Endothelial cell of umbilical vein (primary cell): ENCODE measurements at regions of chrX and their contacts with region 1.

Region 1: GRCh38 chrX:48521353-48522243 is at the start of gene EBP:
- DNase-seq: peak; percentile 83
- H3K4me3 ChIP-seq: peak within 1 kb of the TSS; percentile 45 to 69 (median 65)
- H3K27ac ChIP-seq: peak within 1 kb of the TSS; percentile 10
- H3K4me1 ChIP-seq: peaks cover 2% of the 10 kb centered on the region
- H3K27me3 ChIP-seq: no peaks in the 10 kb centered on the region
- CTCF ChIP-seq: no peak
- POLR2A ChIP-seq: peak; percentile 71
- total RNA-seq, gene EBP: 102 and 114 TPM in 2 replicates

Region 2: DNA sequence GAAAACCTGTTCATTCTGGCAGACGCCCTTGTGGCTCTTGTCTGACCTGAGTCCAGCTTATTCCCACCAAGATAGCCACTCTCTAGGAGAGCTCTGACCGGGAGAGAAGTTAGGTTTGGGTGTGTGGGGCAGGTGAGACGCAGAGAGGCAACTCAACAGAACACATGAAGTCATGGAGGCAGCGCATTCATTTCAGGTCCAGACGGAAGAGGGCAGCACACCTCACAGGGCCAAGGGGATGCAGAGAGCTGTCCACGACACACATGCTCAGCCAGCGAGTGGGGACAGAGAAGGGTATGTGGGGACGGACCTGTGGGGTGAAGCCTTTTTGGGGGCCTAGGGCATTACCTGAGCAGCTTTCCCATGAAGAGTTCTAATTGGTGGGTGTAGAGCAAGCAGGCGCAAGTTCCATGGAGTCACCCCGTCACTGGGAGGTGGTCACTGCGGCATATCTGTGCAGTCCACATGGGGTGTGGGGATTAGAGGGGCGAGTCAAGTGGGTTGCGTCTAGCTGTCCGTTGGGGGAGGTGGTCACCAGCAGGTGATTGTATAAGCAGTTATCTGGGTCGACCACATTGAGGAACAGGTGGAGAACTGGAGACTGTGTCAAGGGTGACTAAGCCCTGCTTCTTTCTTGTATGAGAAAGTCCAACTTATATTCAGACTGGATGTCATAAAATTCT is 838.3 kb before region 1 on chrX:
- CTCF ChIA-PET with region 1: no interaction called
- POLR2A ChIA-PET with region 1: no interaction called
- dilution Hi-C with region 1: no loop called
- intact Hi-C with region 1: no loop called
- DNase-seq: no peak
- H3K4me3 ChIP-seq: no peak overlapping the region
- H3K27ac ChIP-seq: no peak overlapping the region
- H3K4me1 ChIP-seq: no peaks in the 10 kb centered on the region
- H3K27me3 ChIP-seq: no peaks in the 10 kb centered on the region
- CTCF ChIP-seq: no peak
- POLR2A ChIP-seq: no peak

Region 3: GRCh38 chrX:48475774-48476577 is 45.6 kb before region 1 on chrX and contains the start of gene FTSJ1:
- CTCF ChIA-PET with region 1: no interaction called
- POLR2A ChIA-PET with region 1: no interaction called
- dilution Hi-C with region 1: no loop called
- intact Hi-C with region 1: loop called (anchors 5 kb)
- DNase-seq: peak; percentile 92
- H3K4me3 ChIP-seq: peak within 1 kb of the TSS; percentile 76 to 91 (median 88)
- H3K27ac ChIP-seq: peak within 1 kb of the TSS; percentile 56
- H3K4me1 ChIP-seq: peaks cover 6% of the 10 kb centered on the region
- H3K27me3 ChIP-seq: no peaks in the 10 kb centered on the region
- CTCF ChIP-seq: no peak
- POLR2A ChIP-seq: peak; percentile 68
- total RNA-seq, gene FTSJ1: 52.9 and 59.9 TPM in 2 replicates

Region 4: GRCh38 chrX:48574270-48575266 is 53.0 kb after region 1 on chrX and contains the start of gene RBM3:
- CTCF ChIA-PET with region 1: no interaction called
- POLR2A ChIA-PET with region 1: no interaction called
- dilution Hi-C with region 1: no loop called
- intact Hi-C with region 1: no loop called
- DNase-seq: peak; percentile 90
- H3K4me3 ChIP-seq: peak within 1 kb of the TSS; percentile 60 to 96 (median 75)
- H3K27ac ChIP-seq: peak within 1 kb of the TSS; percentile 95
- H3K4me1 ChIP-seq: peaks cover 26% of the 10 kb centered on the region
- H3K27me3 ChIP-seq: no peaks in the 10 kb centered on the region
- CTCF ChIP-seq: peak in 1 of 2 donors; percentile 48
- POLR2A ChIP-seq: peak; percentile 80
- total RNA-seq, gene RBM3: 477 and 485 TPM in 2 replicates